Posterior cingulate gyrus (tissue), 11 donors: ENCODE measurements at regions of chr20 and their contacts with region 1.

Region 1: GRCh38 chr20:35447082-35447789 is 8.2 kb upstream of the CEP250 start:
- DNase-seq: peak; percentile 73 to 97 (median 92)

Region 2: DNA sequence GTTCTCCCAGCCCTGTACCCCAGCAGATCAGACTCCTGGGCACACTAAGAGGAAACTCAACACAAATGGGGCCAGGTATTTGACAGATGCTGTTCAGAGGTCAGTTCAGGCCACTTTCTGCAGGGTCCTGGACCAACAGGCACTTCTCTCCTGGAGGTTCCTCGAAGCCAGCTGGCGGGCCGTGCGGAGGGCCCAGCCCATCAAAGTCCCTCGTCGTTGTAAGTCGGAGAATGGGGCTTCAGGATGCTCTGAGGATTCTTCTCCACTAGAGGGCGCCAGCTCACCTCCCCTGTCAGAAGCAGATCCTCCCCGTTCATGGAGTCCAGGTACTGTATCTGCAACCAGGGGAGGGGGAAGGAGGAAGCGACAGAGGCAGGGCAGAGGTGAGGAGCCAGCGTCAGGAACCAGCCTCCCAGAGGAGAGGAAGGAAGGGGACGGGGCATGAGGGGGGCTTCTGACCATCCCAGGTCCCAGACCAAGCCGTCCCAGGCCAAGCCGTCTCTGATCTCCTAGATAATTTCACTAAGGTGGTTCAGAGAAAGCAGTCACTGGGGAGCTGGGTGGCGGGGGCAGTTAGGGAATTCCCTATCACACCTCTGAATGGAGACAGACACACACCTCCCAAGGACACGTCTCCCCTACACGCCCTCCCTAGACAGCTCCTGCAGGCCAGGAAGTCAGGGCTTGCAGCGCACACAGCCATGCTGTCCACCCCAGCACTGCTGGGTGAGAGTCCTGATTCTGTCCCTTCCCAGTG is 143.3 kb before region 1 on chr20:
- intact Hi-C with region 1: loop called (anchors 2 kb)
- DNase-seq: peak; percentile 38 to 95 (median 76)

Region 3: GRCh38 chr20:35718972-35719635 is 271.9 kb after region 1 on chr20:
- intact Hi-C with region 1: no loop called
- DNase-seq: peak in 1 of 10 donors; percentile 58